CD4-positive, alpha-beta T cell (primary cell): ENCODE measurements at regions of chr22 and their contacts with region 1.

Region 1: DNA sequence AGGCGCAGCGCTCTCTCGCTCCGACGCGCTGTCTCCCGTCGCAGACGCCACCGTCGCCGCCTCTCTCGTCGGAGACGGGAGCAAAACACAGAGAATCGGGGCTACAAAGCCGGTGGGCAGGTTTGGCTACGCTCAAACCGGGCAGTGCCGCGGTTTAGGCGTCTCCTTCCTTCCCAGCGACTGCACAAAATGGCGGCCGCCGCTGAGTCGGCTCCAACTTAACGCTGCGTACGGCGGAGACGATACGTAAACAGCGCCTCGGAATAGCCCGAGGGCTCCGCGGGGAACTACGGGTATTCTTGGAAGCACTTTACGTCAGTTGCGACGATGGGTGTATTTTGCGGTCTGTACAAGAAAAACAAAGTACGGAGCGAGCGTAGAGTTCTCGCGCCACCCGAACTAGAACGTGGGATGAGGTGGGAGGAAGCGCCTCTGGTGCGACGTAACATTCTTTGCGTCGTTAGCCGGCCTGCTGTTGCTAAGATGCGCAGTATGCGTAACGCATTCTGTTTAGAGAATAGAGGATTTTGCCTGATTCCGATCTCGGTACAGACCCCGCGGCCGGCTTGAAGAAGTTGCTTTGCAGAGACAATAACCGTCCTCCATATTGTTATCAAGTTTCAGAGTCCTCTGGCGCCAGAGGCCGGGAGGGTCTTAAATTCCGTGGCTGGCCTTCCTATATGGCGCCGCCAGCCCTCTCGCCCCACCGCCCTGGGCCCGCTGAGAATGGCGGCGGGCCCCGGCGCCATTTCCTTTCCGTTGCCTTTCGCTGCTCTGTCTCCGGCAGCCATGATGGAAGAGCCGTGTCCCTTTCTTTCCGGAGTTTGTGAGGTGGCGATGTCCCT is at the start of gene DDX17:
- DNase-seq: peak; percentile 90 to 98 (median 94)
- ATAC-seq: peak; percentile 88
- H3K4me3 ChIP-seq: peak within 1 kb of the TSS; percentile 69
- H3K4me3 Mint-ChIP-seq: peak within 1 kb of the TSS; percentile 100
- H3K27ac ChIP-seq: peak within 1 kb of the TSS; percentile 98 to 100
- H3K27ac Mint-ChIP-seq: peak within 1 kb of the TSS; percentile 99
- H3K4me1 ChIP-seq: peaks cover 25% of the 10 kb centered on the region
- H3K4me1 Mint-ChIP-seq: peaks cover 57% of the 10 kb centered on the region
- H3K27me3 ChIP-seq: no peaks in the 10 kb centered on the region
- H3K27me3 Mint-ChIP-seq: no peaks in the 10 kb centered on the region
- CTCF ChIP-seq: no peak
- total RNA-seq, gene DDX17: 454 to 462 TPM

Region 2: DNA sequence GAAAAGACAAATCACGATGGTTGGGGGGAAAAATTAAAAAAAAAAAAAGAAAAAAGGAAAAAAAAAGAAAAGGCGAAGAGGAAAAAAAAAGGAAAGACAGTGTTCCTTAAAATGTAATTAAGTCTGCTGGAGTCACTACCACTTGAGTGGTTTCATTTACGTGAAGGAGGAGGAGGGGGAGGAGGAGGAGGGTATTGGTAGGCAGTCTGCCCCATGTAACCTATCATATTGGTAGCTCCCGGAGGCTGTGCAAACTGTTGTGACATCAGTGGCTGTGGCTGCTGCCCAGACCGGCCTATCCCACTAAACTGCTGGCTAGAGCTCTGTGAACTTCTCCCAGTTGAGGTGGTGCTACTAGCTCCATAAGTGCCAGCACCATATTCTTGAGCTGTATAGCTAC is 20.6 kb before region 1 on chr22:
- CTCF ChIA-PET with region 1: interaction called, 3 read pairs
- POLR2A ChIA-PET with region 1: interaction called, 15 read pairs
- intact Hi-C with region 1: loop called (anchors 2 kb)
- DNase-seq: no peak
- ATAC-seq: peak; percentile 27
- H3K4me3 ChIP-seq: no peak overlapping the region
- H3K4me3 Mint-ChIP-seq: no peak overlapping the region
- H3K27ac ChIP-seq: no peak overlapping the region
- H3K27ac Mint-ChIP-seq: peak overlapping the region; percentile 61
- H3K4me1 ChIP-seq: peaks cover 11% of the 10 kb centered on the region
- H3K4me1 Mint-ChIP-seq: peaks cover 67% of the 10 kb centered on the region
- H3K27me3 ChIP-seq: no peaks in the 10 kb centered on the region
- H3K27me3 Mint-ChIP-seq: no peaks in the 10 kb centered on the region
- CTCF ChIP-seq: no peak

Region 3: GRCh38 chr22:38531251-38531938 is 25.1 kb after region 1 on chr22:
- CTCF ChIA-PET with region 1: no interaction called
- POLR2A ChIA-PET with region 1: interaction called, 10 read pairs
- intact Hi-C with region 1: no loop called
- DNase-seq: no peak
- ATAC-seq: peak; percentile 45
- H3K4me3 ChIP-seq: no peak overlapping the region
- H3K4me3 Mint-ChIP-seq: peak overlapping the region; percentile 6
- H3K27ac ChIP-seq: peak overlapping the region; percentile 18 to 52
- H3K27ac Mint-ChIP-seq: peak overlapping the region; percentile 67
- H3K4me1 ChIP-seq: peaks cover 9% of the 10 kb centered on the region
- H3K4me1 Mint-ChIP-seq: peaks cover 11% of the 10 kb centered on the region
- H3K27me3 ChIP-seq: no peaks in the 10 kb centered on the region
- H3K27me3 Mint-ChIP-seq: no peaks in the 10 kb centered on the region
- CTCF ChIP-seq: no peak

Region 4: DNA sequence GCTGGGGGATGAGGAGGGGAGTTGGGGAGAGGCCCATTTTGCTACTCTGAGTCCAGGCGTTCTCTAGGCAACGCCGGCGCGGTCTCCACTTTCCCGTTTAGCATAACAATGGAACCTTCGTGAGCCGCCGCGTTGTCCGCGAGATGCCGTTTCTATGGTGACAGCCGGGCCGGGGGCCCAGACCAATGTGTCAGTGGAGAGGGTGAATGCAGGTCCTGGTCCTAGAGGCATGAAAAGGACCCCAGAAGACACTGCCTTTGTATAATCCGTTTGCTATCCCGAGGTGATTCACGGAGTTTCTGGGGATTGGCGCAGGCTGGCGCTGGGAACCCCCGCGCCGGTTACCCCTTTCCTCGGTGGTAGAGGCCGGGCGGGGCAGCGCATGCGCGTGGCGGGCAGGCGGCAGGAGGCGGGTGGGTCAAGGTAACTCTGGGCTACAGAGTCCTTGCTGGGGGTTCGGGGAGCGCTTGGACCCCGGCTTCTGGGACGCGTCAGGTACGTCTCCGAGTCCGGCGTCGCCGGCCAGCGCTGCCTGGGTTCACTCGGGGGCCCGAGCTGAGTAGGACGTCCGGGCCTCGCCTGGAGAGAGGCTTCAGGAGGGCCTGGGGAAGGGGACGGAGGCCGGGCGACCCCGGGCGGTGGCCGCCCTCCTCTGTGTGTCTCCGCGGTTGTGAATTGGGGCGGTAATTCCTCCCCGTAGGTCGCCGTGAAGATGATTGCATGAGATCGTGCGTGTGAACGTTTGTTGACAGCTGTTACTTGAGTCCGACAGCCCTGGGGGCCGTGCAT is 150.1 kb after region 1 on chr22 and contains the starts of genes CBY1 and FAM227A:
- CTCF ChIA-PET with region 1: no interaction called
- POLR2A ChIA-PET with region 1: interaction called, 4 read pairs
- intact Hi-C with region 1: loop called in 1 of 2 experiments (anchors 10 kb)
- DNase-seq: peak; percentile 74 to 92 (median 82)
- ATAC-seq: peak; percentile 78
- H3K4me3 ChIP-seq: peak within 1 kb of the TSS; percentile 86
- H3K4me3 Mint-ChIP-seq: peak within 1 kb of the TSS; percentile 97
- H3K27ac ChIP-seq: peak within 1 kb of the TSS; percentile 83 to 94
- H3K27ac Mint-ChIP-seq: peak within 1 kb of the TSS; percentile 98
- H3K4me1 ChIP-seq: peaks cover 19% of the 10 kb centered on the region
- H3K4me1 Mint-ChIP-seq: peaks cover 23% of the 10 kb centered on the region
- H3K27me3 ChIP-seq: no peaks in the 10 kb centered on the region
- H3K27me3 Mint-ChIP-seq: no peaks in the 10 kb centered on the region
- CTCF ChIP-seq: no peak
- total RNA-seq, gene CBY1: 4.6 to 7.6 TPM
- total RNA-seq, gene FAM227A: 0.34 to 0.91 TPM